Activated T-helper 2 cell treated with anti-CD3 and anti-CD28 coated beads, Interferon-gamma antibody, Interleukin-2, Interleukin-4, amounts not matched to agents 10 μg/mL and 5 μg/mL and 100 μg/mL, durations not matched to agents 14 hours and 24 hours and 36 hours (primary cell): ENCODE measurements at regions of chr13 and their contacts with region 1.

Region 1: GRCh38 chr13:59677966-59678814 is 485.5 kb downstream of the DIAPH3 start:
- DNase-seq: no peak
- H3K4me3 Mint-ChIP-seq: no peak overlapping the region
- H3K27ac Mint-ChIP-seq: no peak overlapping the region
- H3K4me1 Mint-ChIP-seq: peaks cover 3% of the 10 kb centered on the region
- H3K27me3 Mint-ChIP-seq: no peaks in the 10 kb centered on the region

Region 2: GRCh38 chr13:59391696-59392095 is 286.5 kb before region 1 on chr13:
- intact Hi-C with region 1: loop called (anchors 1 kb)
- DNase-seq: peak; percentile 35
- H3K4me3 Mint-ChIP-seq: no peak overlapping the region
- H3K27ac Mint-ChIP-seq: no peak overlapping the region
- H3K4me1 Mint-ChIP-seq: no peaks in the 10 kb centered on the region
- H3K27me3 Mint-ChIP-seq: peaks cover 14% of the 10 kb centered on the region

Region 3: GRCh38 chr13:59906413-59907049 is 228.3 kb after region 1 on chr13:
- intact Hi-C with region 1: loop called (anchors 5 kb)
- DNase-seq: no peak
- H3K4me3 Mint-ChIP-seq: no peak overlapping the region
- H3K27ac Mint-ChIP-seq: no peak overlapping the region
- H3K4me1 Mint-ChIP-seq: peaks cover 3% of the 10 kb centered on the region
- H3K27me3 Mint-ChIP-seq: no peaks in the 10 kb centered on the region

Region 4: GRCh38 chr13:60329221-60329983 is 651.2 kb after region 1 on chr13:
- intact Hi-C with region 1: loop called (anchors 2 kb)
- DNase-seq: no peak
- H3K4me3 Mint-ChIP-seq: no peak overlapping the region
- H3K27ac Mint-ChIP-seq: no peak overlapping the region
- H3K4me1 Mint-ChIP-seq: peaks cover 2% of the 10 kb centered on the region
- H3K27me3 Mint-ChIP-seq: peaks cover 31% of the 10 kb centered on the region